Naive thymus-derived CD4-positive, alpha-beta T cell (primary cell): ENCODE measurements at regions of chr7 and their contacts with region 1.

Region 1: GRCh38 chr7:128398016-128398840 is 11.6 kb downstream of the IMPDH1 start:
- DNase-seq: peak in 2 of 9 donors; percentile 33 to 55
- ATAC-seq: peak; percentile 71
- H3K4me3 ChIP-seq: no peak overlapping the region
- H3K4me3 Mint-ChIP-seq: no peak overlapping the region
- H3K27ac ChIP-seq: no peak overlapping the region
- H3K27ac Mint-ChIP-seq: no peak overlapping the region
- H3K4me1 ChIP-seq: no peaks in the 10 kb centered on the region
- H3K4me1 Mint-ChIP-seq: peaks cover 0 to 8% (median 5%) of the 10 kb centered on the region in 7 donors
- H3K27me3 ChIP-seq: no peaks in the 10 kb centered on the region
- H3K27me3 Mint-ChIP-seq: no peaks in the 10 kb centered on the region

Region 2: DNA sequence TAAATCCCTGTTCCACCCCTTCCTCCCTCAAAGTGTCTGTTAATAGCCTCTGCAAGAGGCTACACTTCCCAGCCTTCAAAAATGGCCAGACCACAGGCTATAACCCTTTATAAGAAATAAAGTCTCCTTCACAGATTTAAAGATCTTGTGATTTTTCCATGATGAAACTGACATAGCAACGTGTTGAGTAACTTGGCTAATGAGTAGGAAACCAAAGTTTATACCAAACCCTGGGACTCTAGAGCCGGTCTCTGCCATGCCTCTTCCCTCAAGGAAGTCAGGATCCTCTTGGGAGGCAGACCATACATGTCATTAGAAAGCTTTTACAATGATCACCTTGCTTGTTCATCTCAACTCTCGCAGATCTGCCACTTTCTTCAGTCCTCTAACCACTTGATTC is 1189.9 kb before region 1 on chr7:
- CTCF ChIA-PET with region 1: no interaction called
- POLR2A ChIA-PET with region 1: no interaction called
- intact Hi-C with region 1: no loop called
- DNase-seq: no peak
- ATAC-seq: no peak
- H3K4me3 ChIP-seq: no peak overlapping the region
- H3K4me3 Mint-ChIP-seq: no peak overlapping the region
- H3K27ac ChIP-seq: no peak overlapping the region
- H3K27ac Mint-ChIP-seq: no peak overlapping the region
- H3K4me1 ChIP-seq: no peaks in the 10 kb centered on the region
- H3K4me1 Mint-ChIP-seq: no peaks in the 10 kb centered on the region
- H3K27me3 ChIP-seq: no peaks in the 10 kb centered on the region
- H3K27me3 Mint-ChIP-seq: peaks cover 2 to 57% (median 38%) of the 10 kb centered on the region in 5 donors

Region 3: GRCh38 chr7:128387216-128388144 is 10.7 kb before region 1 on chr7:
- CTCF ChIA-PET with region 1: interaction called, 20 read pairs
- POLR2A ChIA-PET with region 1: no interaction called
- intact Hi-C with region 1: no loop called
- DNase-seq: peak; percentile 31 to 67 (median 48)
- ATAC-seq: peak; percentile 87
- H3K4me3 ChIP-seq: no peak overlapping the region
- H3K4me3 Mint-ChIP-seq: no peak overlapping the region
- H3K27ac ChIP-seq: no peak overlapping the region
- H3K27ac Mint-ChIP-seq: no peak overlapping the region
- H3K4me1 ChIP-seq: no peaks in the 10 kb centered on the region
- H3K4me1 Mint-ChIP-seq: peaks cover 0 to 6% (median 1%) of the 10 kb centered on the region in 7 donors
- H3K27me3 ChIP-seq: no peaks in the 10 kb centered on the region
- H3K27me3 Mint-ChIP-seq: peaks cover 0 to 4% (median 0%) of the 10 kb centered on the region in 5 donors

Region 4: DNA sequence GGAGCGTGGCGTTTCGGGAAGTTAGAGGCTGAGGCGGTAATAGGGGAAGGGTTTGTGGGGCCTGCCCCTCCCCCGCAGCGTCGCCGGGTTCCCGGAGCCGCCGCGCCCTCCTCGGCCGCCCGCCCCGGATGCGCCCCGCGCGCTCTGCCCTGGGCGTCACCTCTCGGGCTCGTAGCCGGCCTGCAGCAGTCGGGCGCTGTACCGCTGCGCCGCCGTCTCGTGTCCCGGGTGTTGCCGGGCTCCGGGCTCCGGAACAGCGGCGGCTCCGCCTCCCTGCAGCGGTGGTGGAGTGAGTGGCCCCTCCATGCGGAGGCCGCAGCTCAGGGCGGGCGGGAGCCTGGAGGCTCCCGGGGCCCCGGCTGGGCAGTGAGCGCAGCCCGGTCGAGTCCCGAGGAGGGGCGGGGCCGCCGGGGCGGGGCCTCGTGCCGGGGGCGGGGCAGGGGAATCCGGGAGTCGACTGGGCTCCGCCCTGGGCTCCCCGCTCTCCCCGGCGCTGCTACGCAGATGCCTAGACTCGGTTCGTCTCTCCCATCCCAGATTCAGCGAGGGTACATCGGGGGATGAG is 11.4 kb after region 1 on chr7 and contains the start of gene IMPDH1:
- CTCF ChIA-PET with region 1: interaction called, 18 read pairs
- POLR2A ChIA-PET with region 1: interaction called, 14 read pairs
- intact Hi-C with region 1: loop called in 1 of 2 experiments (anchors 1 kb)
- DNase-seq: peak; percentile 73 to 95 (median 83)
- ATAC-seq: peak; percentile 87
- H3K4me3 ChIP-seq: peak within 1 kb of the TSS; percentile 89
- H3K4me3 Mint-ChIP-seq: peak within 1 kb of the TSS; percentile 88 to 95 (median 92)
- H3K27ac ChIP-seq: peak within 1 kb of the TSS; percentile 81
- H3K27ac Mint-ChIP-seq: peak within 1 kb of the TSS; percentile 87 to 93 (median 90)
- H3K4me1 ChIP-seq: peaks cover 15 to 27% of the 10 kb centered on the region in 2 donors
- H3K4me1 Mint-ChIP-seq: peaks cover 12 to 41% (median 38%) of the 10 kb centered on the region in 7 donors
- H3K27me3 ChIP-seq: no peaks in the 10 kb centered on the region
- H3K27me3 Mint-ChIP-seq: peaks cover 0 to 26% (median 0%) of the 10 kb centered on the region in 5 donors
- total RNA-seq, gene IMPDH1: 36.5 to 92.0 (median 44.4) TPM

Region 5: DNA sequence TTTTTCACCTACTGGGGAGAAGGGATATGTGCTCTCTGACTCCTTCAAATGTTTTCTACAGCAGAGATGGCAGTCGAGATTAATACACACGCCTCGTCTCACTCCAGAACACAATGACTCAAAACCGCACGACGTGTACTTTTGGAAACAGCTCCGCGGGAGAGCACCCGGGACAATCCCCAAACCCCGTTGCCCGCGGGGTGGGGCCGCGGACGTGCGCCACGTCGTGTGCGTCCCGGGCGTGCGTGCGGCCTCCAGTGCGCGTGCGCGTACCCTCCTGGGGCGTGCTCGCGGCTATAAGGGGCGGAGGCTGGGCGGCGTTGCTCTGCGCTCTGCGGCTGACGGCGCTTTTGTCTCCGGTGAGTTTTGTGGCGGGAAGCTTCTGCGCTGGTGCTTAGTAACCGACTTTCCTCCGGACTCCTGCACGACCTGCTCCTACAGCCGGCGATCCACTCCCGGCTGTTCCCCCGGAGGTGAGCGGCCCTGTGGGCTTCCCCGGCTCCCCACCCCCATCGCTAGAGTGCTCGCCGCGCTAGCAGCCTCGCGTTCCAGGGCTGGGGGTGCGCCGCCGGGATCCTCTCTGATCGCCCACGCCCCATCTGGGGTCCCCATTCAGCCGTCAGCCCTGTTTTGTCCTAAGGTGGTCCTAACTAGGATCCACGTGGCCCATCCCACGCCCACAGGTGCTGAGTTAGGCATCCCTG is 57.5 kb after region 1 on chr7 and contains the start of gene HILPDA:
- CTCF ChIA-PET with region 1: interaction called, 20 read pairs
- POLR2A ChIA-PET with region 1: interaction called, 3 read pairs
- intact Hi-C with region 1: loop called in 1 of 2 experiments (anchors 1 kb)
- DNase-seq: peak; percentile 90 to 98 (median 93)
- ATAC-seq: peak; percentile 95
- H3K4me3 ChIP-seq: peak within 1 kb of the TSS; percentile 85
- H3K4me3 Mint-ChIP-seq: peak within 1 kb of the TSS; percentile 81 to 96 (median 92)
- H3K27ac ChIP-seq: peak within 1 kb of the TSS; percentile 83
- H3K27ac Mint-ChIP-seq: peak within 1 kb of the TSS; percentile 72 to 98 (median 89)
- H3K4me1 ChIP-seq: peaks cover 12 to 22% of the 10 kb centered on the region in 2 donors
- H3K4me1 Mint-ChIP-seq: peaks cover 13 to 65% (median 22%) of the 10 kb centered on the region in 7 donors
- H3K27me3 ChIP-seq: no peaks in the 10 kb centered on the region
- H3K27me3 Mint-ChIP-seq: peaks cover 0 to 8% (median 0%) of the 10 kb centered on the region in 5 donors
- total RNA-seq, gene HILPDA: 2.4 to 39.5 (median 4.4) TPM